Activated CD4-positive, alpha-beta T cell treated with anti-CD3 and anti-CD28 coated beads for 36 hours (primary cell): ENCODE measurements at regions of chr3 and their contacts with region 1.

Region 1: GRCh38 chr3:66302288-66302687 is 81.5 kb downstream of the SLC25A26 start:
- DNase-seq: peak; percentile 52
- ATAC-seq: peak; percentile 85
- H3K4me3 Mint-ChIP-seq: peak overlapping the region; percentile 36
- H3K27ac Mint-ChIP-seq: peak overlapping the region; percentile 93
- H3K4me1 Mint-ChIP-seq: peaks cover 77% of the 10 kb centered on the region
- H3K27me3 Mint-ChIP-seq: no peaks in the 10 kb centered on the region

Region 2: GRCh38 chr3:66128623-66129022 is 173.7 kb before region 1 on chr3:
- CTCF ChIA-PET with region 1: no interaction called
- POLR2A ChIA-PET with region 1: no interaction called
- intact Hi-C with region 1: no loop called
- DNase-seq: no peak
- ATAC-seq: no peak
- H3K4me3 Mint-ChIP-seq: no peak overlapping the region
- H3K27ac Mint-ChIP-seq: no peak overlapping the region
- H3K4me1 Mint-ChIP-seq: no peaks in the 10 kb centered on the region
- H3K27me3 Mint-ChIP-seq: peaks cover 2% of the 10 kb centered on the region

Region 3: DNA sequence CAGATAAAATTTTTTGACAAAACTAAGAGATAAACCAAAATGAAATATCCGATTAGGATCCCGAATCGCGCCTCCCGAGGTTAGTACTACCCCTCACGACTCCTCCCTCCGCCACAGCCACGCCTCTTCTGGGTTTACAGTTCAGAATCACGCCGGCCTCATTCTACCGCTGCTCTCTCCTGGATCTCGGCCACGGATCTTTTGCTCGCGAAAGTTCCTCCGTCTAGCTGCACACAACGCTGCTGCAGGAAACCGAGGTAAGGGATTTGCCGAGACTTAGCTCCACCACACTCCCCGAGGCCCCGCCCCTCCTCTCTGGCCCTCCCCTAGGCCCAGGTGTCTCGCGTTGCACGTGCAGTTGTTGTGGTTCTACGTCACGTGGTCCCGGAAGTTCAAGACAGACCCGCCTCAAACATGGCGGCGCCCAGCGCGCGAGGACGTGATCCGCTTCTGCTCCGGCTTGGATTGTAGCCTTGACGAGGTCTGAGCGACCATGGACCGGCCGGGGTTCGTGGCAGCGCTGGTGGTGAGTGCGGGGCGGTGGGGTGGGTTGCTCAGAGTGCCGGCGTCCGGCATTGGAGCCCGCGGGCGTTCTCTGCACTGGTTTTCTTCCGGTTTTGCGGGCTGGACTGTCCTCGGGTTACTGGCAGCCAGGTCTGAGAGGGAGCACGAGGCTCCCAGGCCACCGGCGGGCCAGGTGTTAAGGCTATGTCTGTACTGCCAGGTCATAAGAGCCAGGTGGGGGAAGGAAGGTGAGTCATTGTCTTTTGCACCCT is 81.5 kb before region 1 on chr3 and contains the start of gene SLC25A26:
- CTCF ChIA-PET with region 1: no interaction called
- POLR2A ChIA-PET with region 1: no interaction called
- intact Hi-C with region 1: loop called (anchors 1 to 5 kb)
- DNase-seq: peak; percentile 99
- ATAC-seq: peak; percentile 96
- H3K4me3 Mint-ChIP-seq: peak within 1 kb of the TSS; percentile 86
- H3K27ac Mint-ChIP-seq: peak within 1 kb of the TSS; percentile 92
- H3K4me1 Mint-ChIP-seq: peaks cover 48% of the 10 kb centered on the region
- H3K27me3 Mint-ChIP-seq: no peaks in the 10 kb centered on the region
- total RNA-seq, gene SLC25A26: 14.2 to 22.7 TPM

Region 4: DNA sequence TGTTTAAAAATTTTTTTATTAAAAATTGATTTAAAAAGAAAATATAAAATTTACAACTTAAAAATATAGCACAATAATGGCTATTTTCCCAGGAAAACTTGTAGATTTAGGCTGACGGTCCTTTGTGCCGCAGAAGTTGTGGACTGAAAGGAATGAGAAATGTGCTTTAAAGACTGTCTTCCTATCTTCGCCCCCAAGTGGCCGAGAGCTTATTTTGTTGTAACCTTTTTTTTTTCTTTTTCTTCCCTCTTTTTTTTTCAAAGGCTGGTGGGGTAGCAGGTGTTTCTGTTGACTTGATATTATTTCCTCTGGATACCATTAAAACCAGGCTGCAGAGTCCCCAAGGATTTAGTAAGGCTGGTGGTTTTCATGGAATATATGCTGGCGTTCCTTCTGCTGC is 66.0 kb before region 1 on chr3:
- CTCF ChIA-PET with region 1: interaction called, 3 read pairs
- POLR2A ChIA-PET with region 1: interaction called, 4 read pairs
- intact Hi-C with region 1: loop called (anchors 5 kb)
- DNase-seq: no peak
- ATAC-seq: no peak
- H3K4me3 Mint-ChIP-seq: no peak overlapping the region
- H3K27ac Mint-ChIP-seq: no peak overlapping the region
- H3K4me1 Mint-ChIP-seq: peaks cover 29% of the 10 kb centered on the region
- H3K27me3 Mint-ChIP-seq: no peaks in the 10 kb centered on the region

Region 5: DNA sequence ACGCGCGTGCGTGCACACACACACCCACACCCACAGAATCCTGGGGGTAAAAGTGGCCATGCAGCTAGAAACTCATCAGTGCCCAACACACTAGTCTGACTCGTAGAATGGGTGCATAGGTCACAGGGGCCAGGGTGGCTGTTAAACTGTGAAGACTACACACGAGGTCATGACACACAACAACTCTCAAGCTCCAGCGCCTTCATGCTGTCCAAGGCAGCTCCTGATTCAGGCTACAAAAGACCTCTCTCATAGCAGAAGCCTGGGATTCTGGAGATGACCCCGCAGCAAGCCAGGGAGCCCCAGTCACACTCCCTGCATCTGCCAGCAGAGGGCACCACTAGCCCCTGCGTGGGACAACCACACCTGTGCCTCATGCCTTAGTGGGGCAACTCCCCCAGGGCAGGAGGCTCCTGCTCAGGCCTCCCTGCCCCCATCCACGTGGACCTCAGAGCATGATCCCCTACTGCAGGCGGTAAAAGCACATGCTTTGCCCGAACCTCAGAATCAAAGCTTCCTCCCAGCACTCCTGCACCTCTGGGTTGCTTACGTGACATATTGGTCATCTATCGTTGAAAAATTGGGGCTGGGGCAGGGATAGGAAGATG is 105.4 kb after region 1 on chr3:
- CTCF ChIA-PET with region 1: no interaction called
- POLR2A ChIA-PET with region 1: no interaction called
- intact Hi-C with region 1: no loop called
- DNase-seq: peak; percentile 85
- ATAC-seq: peak; percentile 97
- H3K4me3 Mint-ChIP-seq: no peak overlapping the region
- H3K27ac Mint-ChIP-seq: no peak overlapping the region
- H3K4me1 Mint-ChIP-seq: no peaks in the 10 kb centered on the region
- H3K27me3 Mint-ChIP-seq: no peaks in the 10 kb centered on the region

Region 6: DNA sequence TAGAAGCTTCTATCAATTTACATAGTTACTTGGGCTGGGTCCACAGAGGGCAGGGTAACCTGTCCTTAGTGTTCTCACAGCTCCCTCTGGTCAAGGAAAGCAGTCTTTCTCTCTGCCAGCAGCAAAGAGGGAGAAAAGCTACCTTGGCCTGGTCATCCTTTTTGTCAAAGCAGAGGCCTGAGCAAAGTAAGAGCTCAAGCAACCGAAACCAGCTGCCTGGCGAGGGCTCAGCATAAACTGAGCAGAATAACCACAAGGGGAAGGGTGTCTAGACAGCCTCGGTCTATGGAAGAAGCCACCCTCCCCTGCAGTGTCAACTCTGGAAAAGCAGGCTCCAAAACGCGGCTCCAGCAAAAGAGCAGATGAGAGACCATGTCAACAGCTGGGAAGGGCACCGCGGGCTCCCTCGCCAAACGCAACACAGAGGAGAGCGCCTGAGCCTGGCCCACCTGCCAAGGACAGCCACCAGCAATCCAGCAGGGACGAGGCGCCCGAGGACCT is 181.2 kb after region 1 on chr3:
- CTCF ChIA-PET with region 1: no interaction called
- POLR2A ChIA-PET with region 1: no interaction called
- intact Hi-C with region 1: loop called in 1 of 2 experiments (anchors 10 kb)
- DNase-seq: peak; percentile 32
- ATAC-seq: no peak
- H3K4me3 Mint-ChIP-seq: peak overlapping the region; percentile 4
- H3K27ac Mint-ChIP-seq: peak overlapping the region; percentile 8
- H3K4me1 Mint-ChIP-seq: peaks cover 86% of the 10 kb centered on the region
- H3K27me3 Mint-ChIP-seq: no peaks in the 10 kb centered on the region